BJ (cell line): ENCODE measurements at regions of chr6 and their contacts with region 1.

Region 1: DNA sequence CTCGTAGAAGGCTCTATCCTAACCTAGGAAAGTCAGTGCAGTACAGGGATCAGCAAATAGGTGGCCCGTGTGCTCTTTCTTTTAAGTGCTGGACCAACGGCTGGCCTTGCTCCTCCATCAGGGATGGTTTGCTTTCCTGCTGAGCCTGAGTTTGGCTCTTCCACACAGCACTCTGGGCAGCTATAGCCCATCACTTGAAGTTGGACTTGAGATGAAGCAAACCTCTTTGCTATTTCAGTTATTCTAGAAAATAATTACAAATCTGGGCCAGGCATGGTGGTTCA is 66.9 kb upstream of the KCNK16 start:
- DNase-seq: no peak
- H3K4me3 ChIP-seq: no peak overlapping the region
- H3K27me3 ChIP-seq: no peaks in the 10 kb centered on the region
- CTCF ChIP-seq: no peak

Region 2: GRCh38 chr6:39402239-39402751 is 12.9 kb after region 1 on chr6:
- CTCF ChIA-PET with region 1: interaction called, 17 read pairs
- POLR2A ChIA-PET with region 1: interaction called, 5 read pairs
- DNase-seq: no peak
- H3K4me3 ChIP-seq: no peak overlapping the region
- H3K27me3 ChIP-seq: no peaks in the 10 kb centered on the region
- CTCF ChIP-seq: no peak